HEK293 (cell line): ENCODE measurements at regions of chr11 and their contacts with region 1.

Region 1: GRCh38 chr11:19566583-19567379 is 145.9 kb upstream of the NAV2 start:
- H3K4me3 ChIP-seq: no peak overlapping the region
- H3K27ac ChIP-seq: no peak overlapping the region
- H3K4me1 ChIP-seq: no peaks in the 10 kb centered on the region
- CTCF ChIP-seq: no peak

Region 2: DNA sequence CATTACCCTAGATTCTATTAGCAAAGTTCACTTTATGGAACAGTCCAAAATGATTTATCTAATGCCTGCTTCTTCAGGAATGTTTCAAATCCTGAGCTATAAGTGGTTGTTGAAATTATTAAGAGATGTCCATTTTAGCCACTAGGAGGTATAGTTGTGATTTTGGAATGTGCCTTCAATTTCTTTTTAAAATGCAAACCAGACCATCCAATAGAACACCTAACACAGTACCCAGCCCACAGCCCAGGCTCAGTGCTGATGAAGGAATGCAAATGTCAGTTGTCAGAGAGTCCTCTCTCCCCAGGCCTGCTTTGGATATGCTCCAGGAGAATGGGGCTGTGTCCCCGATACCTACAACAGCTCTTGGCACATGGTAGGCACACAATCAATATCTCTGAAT is 240.3 kb before region 1 on chr11:
- CTCF ChIA-PET with region 1: no interaction called
- POLR2A ChIA-PET with region 1: no interaction called
- H3K4me3 ChIP-seq: no peak overlapping the region
- H3K27ac ChIP-seq: no peak overlapping the region
- H3K4me1 ChIP-seq: no peaks in the 10 kb centered on the region
- CTCF ChIP-seq: no peak

Region 3: GRCh38 chr11:19577976-19578619 is 11.3 kb after region 1 on chr11:
- CTCF ChIA-PET with region 1: interaction called, 13 read pairs
- POLR2A ChIA-PET with region 1: no interaction called
- H3K4me3 ChIP-seq: no peak overlapping the region
- H3K27ac ChIP-seq: no peak overlapping the region
- H3K4me1 ChIP-seq: no peaks in the 10 kb centered on the region
- CTCF ChIP-seq: no peak